Heart right ventricle (tissue), 16 donors: ENCODE measurements at regions of chr19 and their contacts with region 1.

Region 1: GRCh38 chr19:2711172-2711874 is 8.8 kb upstream of the GNG7 start:
- DNase-seq: no peak
- ATAC-seq: peak in 1 of 8 donors; percentile 7
- H3K4me3 ChIP-seq: no peak overlapping the region
- H3K27ac ChIP-seq: no peak overlapping the region
- H3K4me1 ChIP-seq: peaks cover 0 to 7% (median 0%) of the 10 kb centered on the region in 9 donors
- H3K27me3 ChIP-seq: peaks cover 0 to 3% (median 0%) of the 10 kb centered on the region in 7 donors
- CTCF ChIP-seq: no peak

Region 2: GRCh38 chr19:2653710-2654707 is 57.3 kb before region 1 on chr19:
- intact Hi-C with region 1: loop called in 1 of 10 experiments (anchors 5 kb)
- DNase-seq: no peak
- ATAC-seq: peak in 4 of 8 donors; percentile 34 to 79 (median 62)
- H3K4me3 ChIP-seq: no peak overlapping the region
- H3K27ac ChIP-seq: no peak overlapping the region
- H3K4me1 ChIP-seq: peaks cover 0 to 13% (median 0%) of the 10 kb centered on the region in 9 donors
- H3K27me3 ChIP-seq: peaks cover 0 to 5% (median 0%) of the 10 kb centered on the region in 7 donors
- CTCF ChIP-seq: no peak